HCT116 (cell line): ENCODE measurements at regions of chr16 and their contacts with region 1.

Region 1: DNA sequence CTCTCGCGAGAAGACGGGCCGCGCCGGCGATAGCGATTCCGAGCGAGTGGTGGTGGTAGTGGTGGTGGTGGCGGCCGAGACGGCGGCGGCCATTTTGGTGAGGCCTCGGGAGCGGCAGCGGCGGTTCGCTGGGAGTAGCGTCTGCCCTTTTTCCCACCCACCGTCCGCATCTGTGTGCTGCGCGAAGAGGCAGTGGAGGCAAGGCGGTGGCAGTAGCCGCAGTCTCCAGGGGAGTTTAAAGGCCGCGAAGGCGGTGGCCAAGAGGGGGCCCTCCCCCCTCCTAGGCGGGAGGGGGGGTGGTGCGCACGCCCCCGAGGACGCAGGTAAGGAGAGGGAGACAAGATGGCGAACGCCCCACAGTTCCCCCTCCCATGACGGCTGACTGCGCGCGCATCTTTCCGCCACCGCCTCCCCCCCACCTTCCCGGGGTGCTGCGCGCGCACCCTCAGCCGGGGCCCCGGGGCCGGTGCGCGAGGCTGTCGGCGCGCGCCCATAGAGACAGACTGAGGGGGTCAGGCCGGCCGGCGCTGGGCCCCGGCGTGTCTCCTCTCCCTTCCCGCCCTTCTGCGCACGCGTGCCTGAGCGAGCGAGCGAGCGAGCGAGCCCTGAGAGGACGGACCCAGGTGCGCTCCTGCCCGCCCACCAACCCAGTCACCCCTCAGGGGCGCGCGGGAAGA is 694 bp upstream of the SRCAP start:
- DNase-seq: peak; percentile 95
- ATAC-seq: peak; percentile 75
- H3K4me3 ChIP-seq: peak overlapping the region; percentile 94 to 95
- H3K27ac ChIP-seq: peak overlapping the region; percentile 100
- H3K4me1 ChIP-seq: peaks cover 13 to 27% of the 10 kb centered on the region in 2 experiments
- H3K27me3 ChIP-seq: no peaks in the 10 kb centered on the region
- CTCF ChIP-seq: no peak
- POLR2A ChIP-seq: no peak
- RAD21 ChIP-seq: no peak

Region 2: DNA sequence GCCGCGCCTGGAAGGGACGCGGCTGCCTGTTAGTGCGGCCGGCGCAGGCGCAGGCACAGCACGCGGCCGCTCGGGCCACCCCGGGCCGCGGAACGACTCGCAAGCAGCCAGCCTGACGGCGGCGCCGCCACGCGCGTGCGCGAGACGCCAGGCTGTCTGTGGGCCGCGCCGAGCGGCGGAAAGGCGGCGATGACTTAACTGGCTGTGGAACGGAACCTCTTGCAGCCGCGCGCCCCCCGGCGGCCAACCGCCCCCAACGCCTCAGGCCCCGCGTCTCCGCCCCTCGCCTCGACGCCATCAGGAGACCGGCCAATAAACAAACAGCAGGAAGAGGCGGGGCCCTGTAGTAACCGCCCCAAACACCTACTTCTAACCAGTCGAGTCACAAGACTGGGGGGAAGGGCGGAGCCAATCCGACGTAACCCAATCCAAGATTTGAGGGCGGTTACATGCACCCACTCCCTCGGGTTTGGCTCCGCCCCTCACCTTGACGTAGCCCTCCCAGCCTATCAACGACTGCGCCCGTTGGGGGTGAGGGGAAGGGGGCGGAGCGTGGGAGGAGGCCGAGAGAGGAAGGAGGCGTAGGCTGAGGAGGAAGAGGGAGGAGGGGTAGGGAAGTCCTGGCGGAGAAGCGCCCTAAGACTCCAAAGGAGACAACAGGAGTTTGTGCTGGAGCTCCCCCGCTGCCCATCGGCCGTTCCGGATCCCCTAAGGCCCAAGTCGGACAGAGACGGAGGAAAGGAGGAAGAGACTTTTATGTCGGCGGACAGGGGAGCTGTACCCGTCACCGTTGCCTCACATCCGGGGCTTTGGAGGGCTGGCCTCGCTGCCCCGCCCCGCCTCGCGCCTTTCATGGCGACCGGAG is 40.2 kb before region 1 on chr16 and contains the start of gene FBRS:
- CTCF ChIA-PET with region 1: interaction called, 9 read pairs
- POLR2A ChIA-PET with region 1: interaction called, 4 read pairs
- RAD21 ChIA-PET with region 1: no interaction called
- intact Hi-C with region 1: loop called (anchors 2 kb)
- DNase-seq: peak; percentile 100
- ATAC-seq: peak; percentile 83
- H3K4me3 ChIP-seq: peak within 1 kb of the TSS; percentile 88 to 94
- H3K27ac ChIP-seq: peak within 1 kb of the TSS; percentile 97
- H3K4me1 ChIP-seq: peaks cover 18 to 24% of the 10 kb centered on the region in 2 experiments
- H3K27me3 ChIP-seq: no peaks in the 10 kb centered on the region
- CTCF ChIP-seq: peak in 2 of 3 experiments; percentile 71 to 73; a peak in 4 of 6 replicates
- POLR2A ChIP-seq: peak; percentile 55
- RAD21 ChIP-seq: no peak
- total RNA-seq, gene FBRS: 65.3 TPM

Region 3: GRCh38 chr16:30740364-30741251 is 42.3 kb after region 1 on chr16:
- CTCF ChIA-PET with region 1: no interaction called
- POLR2A ChIA-PET with region 1: no interaction called
- RAD21 ChIA-PET with region 1: no interaction called
- intact Hi-C with region 1: loop called (anchors 2 kb)
- DNase-seq: peak; percentile 87
- ATAC-seq: peak; percentile 91
- H3K4me3 ChIP-seq: peak overlapping the region; percentile 47 to 60
- H3K27ac ChIP-seq: peak overlapping the region; percentile 72
- H3K4me1 ChIP-seq: peaks cover 29 to 36% of the 10 kb centered on the region in 2 experiments
- H3K27me3 ChIP-seq: no peaks in the 10 kb centered on the region
- CTCF ChIP-seq: no peak
- POLR2A ChIP-seq: no peak
- RAD21 ChIP-seq: no peak